Prostate gland (tissue), 2 donors: ENCODE measurements at regions of chr12 and their contacts with region 1.

Region 1: GRCh38 chr12:111405149-111405860 is 418 bp upstream of the SH2B3 start:
- DNase-seq: peak; percentile 83
- H3K4me3 ChIP-seq: peak overlapping the region; percentile 84 to 93
- H3K27ac ChIP-seq: peak overlapping the region; percentile 67 to 68
- H3K4me1 ChIP-seq: peaks cover 5% of the 10 kb centered on the region
- H3K27me3 ChIP-seq: no peaks in the 10 kb centered on the region
- CTCF ChIP-seq: peak in 3 of 4 experiments; percentile 26 to 61 (median 61)
- POLR2A ChIP-seq: no peak

Region 2: DNA sequence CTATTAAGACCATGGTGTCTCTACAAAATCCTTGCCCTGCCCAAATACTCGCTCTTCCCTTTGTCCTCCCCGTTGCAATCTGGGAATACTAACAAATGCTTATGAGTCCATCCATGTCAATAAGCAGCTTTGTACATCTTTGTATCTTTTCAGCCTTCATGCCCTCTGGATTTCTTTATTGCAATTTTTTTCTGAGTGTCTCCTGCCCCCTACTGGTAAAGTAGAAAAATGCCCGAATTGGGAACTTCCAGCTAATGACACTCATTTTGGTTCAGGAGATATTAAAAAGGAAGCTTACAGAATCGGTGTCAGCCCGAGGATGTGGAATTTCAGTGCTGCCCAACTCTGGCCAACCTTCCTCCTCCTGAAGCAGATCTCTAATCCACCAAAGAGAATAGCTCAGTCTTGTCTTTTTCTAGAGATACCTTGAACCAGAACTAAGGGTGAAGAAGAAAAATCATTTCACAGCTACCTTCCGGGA is 46.4 kb after region 1 on chr12:
- intact Hi-C with region 1: loop called (anchors 5 kb)
- DNase-seq: no peak
- H3K4me3 ChIP-seq: no peak overlapping the region
- H3K27ac ChIP-seq: no peak overlapping the region
- H3K4me1 ChIP-seq: no peaks in the 10 kb centered on the region
- H3K27me3 ChIP-seq: no peaks in the 10 kb centered on the region
- CTCF ChIP-seq: peak in 3 of 4 experiments; percentile 73 to 84 (median 83)
- POLR2A ChIP-seq: no peak